ENCODE measurements at regions of chr1 and their contacts with region 1.

Region 1: DNA sequence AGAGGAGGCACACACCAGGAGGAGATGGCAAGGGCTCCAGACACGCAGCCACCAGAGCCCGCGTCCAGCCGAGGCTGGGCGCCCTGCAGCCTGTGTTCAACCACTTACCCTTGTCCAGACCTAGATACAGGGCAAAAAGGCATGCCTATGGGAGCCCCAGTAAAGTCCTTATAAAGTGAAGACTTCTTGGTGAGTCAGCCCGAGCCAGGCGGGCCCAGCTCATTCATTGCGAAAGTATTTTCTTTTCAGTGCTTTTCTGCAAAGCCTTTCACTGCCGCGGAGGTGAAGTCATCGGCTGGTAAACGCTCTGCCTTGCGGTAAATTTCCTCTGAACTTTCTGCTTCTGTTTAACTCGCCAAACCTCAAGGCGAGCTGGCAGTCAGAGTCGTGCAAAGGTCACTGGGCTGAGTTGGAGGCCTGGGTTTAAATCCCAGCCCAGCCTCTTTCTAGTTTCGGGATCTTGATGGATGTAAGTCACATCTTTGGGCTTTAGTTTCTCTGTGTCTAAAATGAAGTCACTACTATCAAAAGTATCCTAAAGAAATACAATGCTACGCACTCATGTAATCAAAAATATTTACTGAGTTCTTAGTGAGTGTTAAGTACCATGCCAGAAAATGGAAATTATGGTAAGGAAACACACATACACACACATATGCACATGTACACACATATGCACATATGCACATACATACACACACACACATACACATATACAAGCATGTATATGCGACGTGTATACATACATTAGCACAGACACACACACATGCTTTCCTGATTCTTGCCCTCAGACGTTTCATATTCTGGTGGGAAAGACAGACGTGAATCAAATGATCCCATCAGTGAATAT is 54.7 kb upstream of the IFFO2 start:
- DNase-seq: peak; percentile 89 to 96
- H3K4me3 ChIP-seq: peak overlapping the region; percentile 48; the same call in 1 of the 2 replicates
- H3K27ac ChIP-seq: peak overlapping the region; percentile 99
- H3K4me1 ChIP-seq: peaks cover 75% of the 10 kb centered on the region
- H3K27me3 ChIP-seq: no peaks in the 10 kb centered on the region
- CTCF ChIP-seq: no peak

Region 2: GRCh38 chr1:18926315-18927081 is 84.7 kb before region 1 on chr1:
- CTCF ChIA-PET with region 1: interaction called, 7 read pairs
- POLR2A ChIA-PET with region 1: interaction called, 25 read pairs
- intact Hi-C with region 1: loop called (anchors 1 kb)
- DNase-seq: peak; percentile 78 to 84
- H3K4me3 ChIP-seq: peak overlapping the region; percentile 52; the same call in 1 of the 2 replicates
- H3K27ac ChIP-seq: peak overlapping the region; percentile 92
- H3K4me1 ChIP-seq: peaks cover 54% of the 10 kb centered on the region
- H3K27me3 ChIP-seq: no peaks in the 10 kb centered on the region
- CTCF ChIP-seq: no peak

Region 3: DNA sequence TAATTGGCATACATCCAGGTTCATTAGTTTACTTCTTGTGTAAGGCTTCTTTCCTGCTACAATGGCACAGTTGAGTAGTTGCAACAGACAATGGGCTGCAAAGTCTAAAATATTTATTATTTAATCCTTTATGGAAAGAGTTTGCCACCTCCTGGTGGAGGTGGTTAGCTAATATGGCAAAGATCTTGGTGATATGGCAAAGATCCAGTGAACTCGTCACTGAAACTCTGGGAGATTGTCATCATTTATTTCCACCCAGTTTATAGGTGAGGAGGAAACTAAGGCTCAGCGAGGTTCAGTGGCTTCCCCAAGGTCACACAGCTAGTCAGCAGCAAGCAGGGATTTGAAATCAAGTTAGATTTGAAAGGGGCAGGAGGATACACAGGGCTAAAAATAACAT is 38.7 kb before region 1 on chr1:
- CTCF ChIA-PET with region 1: no interaction called
- POLR2A ChIA-PET with region 1: interaction called, 5 read pairs
- intact Hi-C with region 1: loop called (anchors 2 kb)
- DNase-seq: peak in 1 of 2 experiments; percentile 56
- H3K4me3 ChIP-seq: no peak overlapping the region
- H3K27ac ChIP-seq: no peak overlapping the region
- H3K4me1 ChIP-seq: peaks cover 10% of the 10 kb centered on the region; the same call in 1 of the 2 replicates
- H3K27me3 ChIP-seq: no peaks in the 10 kb centered on the region
- CTCF ChIP-seq: peak; percentile 31; the same call in 1 of the 2 replicates

Region 4: GRCh38 chr1:19046972-19047731 is 35.9 kb after region 1 on chr1:
- CTCF ChIA-PET with region 1: no interaction called
- POLR2A ChIA-PET with region 1: interaction called, 5 read pairs
- intact Hi-C with region 1: loop called (anchors 1 kb)
- DNase-seq: no peak
- H3K4me3 ChIP-seq: no peak overlapping the region
- H3K27ac ChIP-seq: no peak overlapping the region
- H3K4me1 ChIP-seq: no peaks in the 10 kb centered on the region
- H3K27me3 ChIP-seq: no peaks in the 10 kb centered on the region
- CTCF ChIP-seq: no peak